ENCODE measurements at regions of chr5 and their contacts with region 1.

Region 1: GRCh38 chr5:74766849-74767578 is at the starts of genes GFM2 and NSA2:
- DNase-seq: peak; percentile 77 to 94 (median 92)
- ATAC-seq: peak; percentile 97
- H3K4me3 ChIP-seq: peak within 1 kb of the TSS; percentile 98
- H3K4me3 Mint-ChIP-seq: peak within 1 kb of the TSS; percentile 97 to 100 (median 99)
- H3K27ac ChIP-seq: peak within 1 kb of the TSS; percentile 81
- H3K27ac Mint-ChIP-seq: peak within 1 kb of the TSS; percentile 95 to 99 (median 98)
- H3K4me1 ChIP-seq: peaks cover 22% of the 10 kb centered on the region in 2 donors
- H3K4me1 Mint-ChIP-seq: peaks cover 12 to 57% (median 40%) of the 10 kb centered on the region in 7 donors
- H3K27me3 ChIP-seq: no peaks in the 10 kb centered on the region
- H3K27me3 Mint-ChIP-seq: no peaks in the 10 kb centered on the region
- total RNA-seq, gene GFM2: 17.8 to 30.2 (median 20.5) TPM
- total RNA-seq, gene NSA2: 70.9 to 153 (median 126) TPM

Region 2: GRCh38 chr5:73498057-73499008 is 1268.7 kb before region 1 on chr5 and contains the start of gene BTF3:
- CTCF ChIA-PET with region 1: no interaction called
- POLR2A ChIA-PET with region 1: no interaction called
- intact Hi-C with region 1: loop called (anchors 1 to 2 kb)
- DNase-seq: peak; percentile 83 to 94 (median 91)
- ATAC-seq: peak; percentile 96
- H3K4me3 ChIP-seq: peak within 1 kb of the TSS; percentile 81
- H3K4me3 Mint-ChIP-seq: peak within 1 kb of the TSS; percentile 92 to 99 (median 97)
- H3K27ac ChIP-seq: peak within 1 kb of the TSS; percentile 93
- H3K27ac Mint-ChIP-seq: peak within 1 kb of the TSS; percentile 97 to 100 (median 99)
- H3K4me1 ChIP-seq: peaks cover 22 to 31% of the 10 kb centered on the region in 2 donors
- H3K4me1 Mint-ChIP-seq: peaks cover 26 to 57% (median 41%) of the 10 kb centered on the region in 7 donors
- H3K27me3 ChIP-seq: peaks cover 0 to 4% of the 10 kb centered on the region in 2 donors
- H3K27me3 Mint-ChIP-seq: peaks cover 4 to 15% (median 13%) of the 10 kb centered on the region in 5 donors
- total RNA-seq, gene BTF3: 557 to 758 (median 700) TPM

Region 3: GRCh38 chr5:74684900-74685851 is 81.8 kb before region 1 on chr5 and contains the start of gene HEXB:
- CTCF ChIA-PET with region 1: interaction called, 3 read pairs
- POLR2A ChIA-PET with region 1: no interaction called
- intact Hi-C with region 1: loop called (anchors 1 kb)
- DNase-seq: peak; percentile 55 to 89 (median 69)
- ATAC-seq: peak; percentile 91
- H3K4me3 ChIP-seq: peak within 1 kb of the TSS; percentile 86
- H3K4me3 Mint-ChIP-seq: peak within 1 kb of the TSS; percentile 76 to 92 (median 86)
- H3K27ac ChIP-seq: peak within 1 kb of the TSS; percentile 78
- H3K27ac Mint-ChIP-seq: peak within 1 kb of the TSS; percentile 76 to 92 (median 86)
- H3K4me1 ChIP-seq: peaks cover 7 to 13% of the 10 kb centered on the region in 2 donors
- H3K4me1 Mint-ChIP-seq: peaks cover 16 to 34% (median 30%) of the 10 kb centered on the region in 7 donors
- H3K27me3 ChIP-seq: no peaks in the 10 kb centered on the region
- H3K27me3 Mint-ChIP-seq: peaks cover 0 to 17% (median 0%) of the 10 kb centered on the region in 5 donors
- total RNA-seq, gene HEXB: 37.7 to 88.9 (median 64.2) TPM

Region 4: DNA sequence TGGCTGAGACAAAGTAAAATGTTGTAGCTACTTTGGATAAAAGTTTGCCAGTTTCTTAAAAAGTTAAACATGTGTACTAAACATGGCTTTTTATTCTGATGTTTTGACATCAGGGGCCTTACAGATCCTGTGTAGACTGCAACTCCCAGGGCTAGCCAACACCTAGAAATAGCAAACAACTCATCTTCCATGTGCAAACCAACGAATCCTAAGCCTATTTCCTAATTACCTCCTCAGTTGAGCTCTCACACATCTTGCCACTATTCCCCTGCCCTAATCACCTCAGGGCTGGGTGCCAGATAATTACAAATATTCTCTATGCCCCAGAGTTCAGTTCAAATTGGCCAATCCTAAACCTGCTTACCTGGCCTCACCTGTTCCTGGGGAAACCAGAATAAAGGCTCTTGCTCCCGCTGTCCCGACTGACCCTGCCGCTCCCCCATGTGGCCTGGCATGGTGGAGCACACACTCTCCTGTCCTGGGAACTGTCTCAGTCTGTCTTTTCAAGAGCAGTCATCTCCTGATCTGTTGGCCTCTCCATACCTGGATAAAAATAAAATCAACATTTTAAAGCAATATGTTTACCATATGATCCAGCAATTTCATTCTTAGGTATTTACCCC is 136.3 kb after region 1 on chr5:
- CTCF ChIA-PET with region 1: no interaction called
- POLR2A ChIA-PET with region 1: no interaction called
- intact Hi-C with region 1: loop called in 1 of 2 experiments (anchors 1 kb)
- DNase-seq: peak in 6 of 9 donors; percentile 3 to 21 (median 10)
- ATAC-seq: peak; percentile 75
- H3K4me3 ChIP-seq: no peak overlapping the region
- H3K4me3 Mint-ChIP-seq: no peak overlapping the region
- H3K27ac ChIP-seq: no peak overlapping the region
- H3K27ac Mint-ChIP-seq: no peak overlapping the region
- H3K4me1 ChIP-seq: no peaks in the 10 kb centered on the region
- H3K4me1 Mint-ChIP-seq: peaks cover 0 to 6% (median 0%) of the 10 kb centered on the region in 7 donors
- H3K27me3 ChIP-seq: no peaks in the 10 kb centered on the region
- H3K27me3 Mint-ChIP-seq: no peaks in the 10 kb centered on the region

Region 5: DNA sequence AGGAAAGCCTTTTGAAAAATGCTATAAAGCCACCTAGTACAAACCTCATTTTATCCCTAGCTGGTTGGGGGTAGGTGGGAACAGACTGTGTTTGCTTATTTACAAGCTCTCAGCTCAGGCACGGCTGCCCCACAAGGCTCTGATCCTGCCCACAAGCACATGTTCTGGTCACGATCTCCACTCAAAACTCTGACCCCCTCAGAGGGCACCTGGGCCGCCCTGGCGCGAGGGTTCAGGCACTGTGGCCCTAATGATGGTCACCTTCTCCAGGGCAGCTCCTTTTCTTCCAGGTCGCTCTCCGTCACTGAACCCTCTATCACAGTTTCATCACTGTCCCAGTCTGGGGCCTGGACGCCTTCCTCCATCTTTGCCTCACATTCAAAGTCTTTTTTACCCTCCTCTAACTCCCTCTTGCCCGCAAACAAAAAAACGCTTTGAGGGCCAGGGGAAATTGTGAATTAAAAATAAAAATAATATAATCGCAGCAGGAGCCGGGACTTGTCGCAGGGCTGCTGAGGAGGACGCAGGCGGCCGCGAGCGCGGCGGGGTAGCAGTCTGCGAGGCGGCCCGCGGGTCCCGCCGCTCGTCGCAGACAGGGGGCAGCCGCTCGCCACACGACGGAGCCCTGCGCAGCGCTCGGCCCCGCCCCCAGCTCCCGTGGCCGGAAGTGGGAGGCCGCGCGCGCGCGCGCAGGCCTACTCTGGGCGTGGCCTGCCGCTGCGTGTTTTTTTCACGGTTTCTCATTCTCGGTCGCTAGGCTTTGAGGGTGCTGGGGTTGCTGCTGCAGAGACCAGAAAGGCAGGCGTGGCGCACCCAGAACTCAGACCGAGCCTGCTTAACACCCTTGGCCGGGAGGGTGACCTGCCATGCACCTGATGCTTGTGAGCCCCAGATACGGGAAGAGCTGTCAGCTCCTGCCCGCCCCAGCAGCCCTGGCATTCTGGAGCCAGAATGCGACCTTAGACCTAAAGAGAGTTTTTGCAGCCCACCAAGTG is 469.6 kb after region 1 on chr5 and contains the start of gene ANKRD31:
- CTCF ChIA-PET with region 1: interaction called, 3 read pairs
- POLR2A ChIA-PET with region 1: no interaction called
- intact Hi-C with region 1: loop called (anchors 1 to 10 kb)
- DNase-seq: peak; percentile 83 to 97 (median 93)
- ATAC-seq: peak; percentile 100
- H3K4me3 ChIP-seq: peak within 1 kb of the TSS; percentile 69
- H3K4me3 Mint-ChIP-seq: peak within 1 kb of the TSS; percentile 78 to 99 (median 96)
- H3K27ac ChIP-seq: peak within 1 kb of the TSS; percentile 80
- H3K27ac Mint-ChIP-seq: peak within 1 kb of the TSS; percentile 89 to 99 (median 98)
- H3K4me1 ChIP-seq: peaks cover 0 to 17% of the 10 kb centered on the region in 2 donors
- H3K4me1 Mint-ChIP-seq: peaks cover 3 to 22% (median 18%) of the 10 kb centered on the region in 7 donors
- H3K27me3 ChIP-seq: no peaks in the 10 kb centered on the region
- H3K27me3 Mint-ChIP-seq: peaks cover 0 to 4% (median 0%) of the 10 kb centered on the region in 5 donors
- total RNA-seq, gene ANKRD31: 0.29 to 1.6 (median 0.93) TPM

Region 6: GRCh38 chr5:75336625-75337339 is 569.8 kb after region 1 on chr5 and contains the start of gene HMGCR:
- CTCF ChIA-PET with region 1: no interaction called
- POLR2A ChIA-PET with region 1: no interaction called
- intact Hi-C with region 1: loop called (anchors 1 kb)
- DNase-seq: peak; percentile 82 to 97 (median 95)
- ATAC-seq: peak; percentile 96
- H3K4me3 ChIP-seq: peak within 1 kb of the TSS; percentile 85
- H3K4me3 Mint-ChIP-seq: no peak within 1 kb of the TSS
- H3K27ac ChIP-seq: peak within 1 kb of the TSS; percentile 83
- H3K27ac Mint-ChIP-seq: no peak within 1 kb of the TSS
- H3K4me1 ChIP-seq: peaks cover 8 to 10% of the 10 kb centered on the region in 2 donors
- H3K4me1 Mint-ChIP-seq: peaks cover 18 to 41% (median 37%) of the 10 kb centered on the region in 7 donors
- H3K27me3 ChIP-seq: no peaks in the 10 kb centered on the region
- H3K27me3 Mint-ChIP-seq: no peaks in the 10 kb centered on the region
- total RNA-seq, gene HMGCR: 38.8 to 57.3 (median 43.8) TPM

Region 7: GRCh38 chr5:75717082-75717922 is 950.3 kb after region 1 on chr5 and contains the start of gene POC5:
- CTCF ChIA-PET with region 1: no interaction called
- POLR2A ChIA-PET with region 1: no interaction called
- intact Hi-C with region 1: loop called (anchors 1 to 5 kb)
- DNase-seq: peak; percentile 93 to 99 (median 98)
- ATAC-seq: peak; percentile 97
- H3K4me3 ChIP-seq: peak within 1 kb of the TSS; percentile 74
- H3K4me3 Mint-ChIP-seq: peak within 1 kb of the TSS; percentile 93 to 100 (median 99)
- H3K27ac ChIP-seq: peak within 1 kb of the TSS; percentile 78
- H3K27ac Mint-ChIP-seq: peak within 1 kb of the TSS; percentile 92 to 100 (median 97)
- H3K4me1 ChIP-seq: peaks cover 5 to 8% of the 10 kb centered on the region in 2 donors
- H3K4me1 Mint-ChIP-seq: peaks cover 26 to 47% (median 37%) of the 10 kb centered on the region in 7 donors
- H3K27me3 ChIP-seq: no peaks in the 10 kb centered on the region
- H3K27me3 Mint-ChIP-seq: peaks cover 0 to 10% (median 0%) of the 10 kb centered on the region in 5 donors
- total RNA-seq, gene POC5: 8.5 to 17.9 (median 15.0) TPM